Naive thymus-derived CD4-positive, alpha-beta T cell (primary cell): ENCODE measurements at regions of chr10 and their contacts with region 1.

Region 1: GRCh38 chr10:103367782-103368518 is at the start of gene TAF5:
- DNase-seq: peak; percentile 70 to 94 (median 90)
- ATAC-seq: peak; percentile 88
- H3K4me3 ChIP-seq: peak within 1 kb of the TSS; percentile 58
- H3K4me3 Mint-ChIP-seq: peak within 1 kb of the TSS; percentile 92 to 99 (median 96)
- H3K27ac ChIP-seq: peak within 1 kb of the TSS; percentile 77
- H3K27ac Mint-ChIP-seq: peak within 1 kb of the TSS; percentile 84 to 98 (median 94)
- H3K4me1 ChIP-seq: peaks cover 4 to 11% of the 10 kb centered on the region in 2 donors
- H3K4me1 Mint-ChIP-seq: peaks cover 0 to 35% (median 23%) of the 10 kb centered on the region in 7 donors
- H3K27me3 ChIP-seq: no peaks in the 10 kb centered on the region
- H3K27me3 Mint-ChIP-seq: no peaks in the 10 kb centered on the region
- total RNA-seq, gene TAF5: 4.7 to 8.9 (median 7.1) TPM

Region 2: DNA sequence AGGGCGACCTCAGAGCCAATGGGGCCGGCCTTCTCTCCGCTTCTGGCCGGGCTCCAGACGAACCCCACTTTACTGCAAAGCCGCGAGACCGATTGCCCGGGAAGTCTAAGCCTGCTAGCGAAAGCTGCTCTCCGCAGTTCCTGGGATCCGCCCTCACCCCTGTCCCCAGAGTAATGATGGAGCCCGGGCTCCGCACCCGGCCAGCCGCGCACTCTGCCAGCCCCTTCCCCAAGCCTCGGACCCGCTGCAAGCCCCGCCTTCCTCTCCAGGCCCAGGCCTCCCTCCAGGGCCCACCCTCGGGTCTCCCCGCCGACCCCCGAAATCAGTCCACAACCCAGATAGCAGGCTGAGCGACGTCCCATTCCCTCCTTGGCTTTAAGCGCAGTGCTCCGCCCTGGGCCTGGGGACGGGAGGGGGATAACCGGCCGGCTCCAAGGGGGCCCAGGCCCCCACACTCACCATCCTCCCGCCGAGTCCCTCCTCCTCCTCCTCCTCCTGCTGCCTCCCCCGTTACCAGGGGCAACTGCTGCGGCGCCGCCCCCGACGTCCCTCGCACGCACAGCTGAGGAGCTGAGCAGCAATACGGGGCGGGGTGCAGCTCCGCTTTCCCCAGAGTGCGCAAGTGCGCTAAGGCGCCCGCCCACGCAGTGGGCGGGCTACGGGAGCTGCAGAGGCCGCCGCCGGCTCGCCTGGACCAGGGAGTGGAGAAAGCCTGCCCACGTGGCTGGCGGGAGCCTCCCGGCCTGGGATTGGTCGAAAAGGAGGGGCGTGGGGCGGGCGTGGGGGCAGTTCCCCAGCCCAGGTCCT is 653.9 kb before region 1 on chr10 and contains the start of gene ARL3:
- CTCF ChIA-PET with region 1: no interaction called
- POLR2A ChIA-PET with region 1: no interaction called
- intact Hi-C with region 1: loop called in 1 of 2 experiments (anchors 1 kb)
- DNase-seq: peak; percentile 75 to 95 (median 89)
- ATAC-seq: peak; percentile 96
- H3K4me3 ChIP-seq: peak within 1 kb of the TSS; percentile 98
- H3K4me3 Mint-ChIP-seq: peak within 1 kb of the TSS; percentile 86 to 98 (median 94)
- H3K27ac ChIP-seq: peak within 1 kb of the TSS; percentile 92
- H3K27ac Mint-ChIP-seq: peak within 1 kb of the TSS; percentile 66 to 95 (median 90)
- H3K4me1 ChIP-seq: peaks cover 4 to 18% of the 10 kb centered on the region in 2 donors
- H3K4me1 Mint-ChIP-seq: peaks cover 26 to 52% (median 43%) of the 10 kb centered on the region in 7 donors
- H3K27me3 ChIP-seq: no peaks in the 10 kb centered on the region
- H3K27me3 Mint-ChIP-seq: no peaks in the 10 kb centered on the region
- total RNA-seq, gene ARL3: 1.3 to 5.1 (median 2.9) TPM

Region 3: DNA sequence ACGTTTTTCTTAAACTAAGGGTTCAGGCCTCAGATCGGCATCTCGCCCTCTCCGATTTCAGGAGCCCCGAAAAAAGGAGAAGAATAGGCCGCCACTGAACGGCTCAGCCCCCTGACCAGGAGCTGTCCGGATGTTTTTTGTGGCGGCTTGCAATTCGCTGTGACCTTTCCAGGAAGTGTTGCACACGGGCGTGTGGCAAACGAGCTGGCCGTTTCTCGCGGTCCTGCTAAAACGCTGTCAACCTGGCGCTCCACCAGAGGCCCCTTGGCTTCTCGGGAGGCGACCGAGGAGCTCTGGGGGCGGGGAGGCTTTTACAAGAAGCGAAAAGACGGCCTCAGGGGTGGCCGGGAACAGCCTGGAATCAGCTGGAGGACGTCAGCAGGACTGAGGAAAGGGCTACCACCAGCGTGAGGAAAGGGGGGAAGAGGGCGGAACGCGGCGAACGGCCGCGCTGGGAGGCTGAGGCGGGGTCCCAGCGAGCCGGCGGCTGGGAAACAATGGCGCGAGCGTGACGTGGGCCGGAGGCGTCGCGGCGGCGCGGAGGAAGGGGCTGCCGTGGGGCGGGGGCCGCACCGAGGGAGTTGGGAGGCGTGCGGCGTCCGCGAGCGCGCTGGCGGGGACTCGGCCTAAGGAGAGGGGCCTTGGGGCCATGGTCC is 175.4 kb before region 1 on chr10:
- CTCF ChIA-PET with region 1: no interaction called
- POLR2A ChIA-PET with region 1: interaction called, 3 read pairs
- intact Hi-C with region 1: loop called in 1 of 2 experiments (anchors 5 kb)
- DNase-seq: peak; percentile 36 to 76 (median 63)
- ATAC-seq: peak; percentile 60
- H3K4me3 ChIP-seq: peak overlapping the region; percentile 85
- H3K4me3 Mint-ChIP-seq: peak overlapping the region; percentile 91 to 100 (median 98)
- H3K27ac ChIP-seq: peak overlapping the region; percentile 97
- H3K27ac Mint-ChIP-seq: peak overlapping the region; percentile 81 to 100 (median 95)
- H3K4me1 ChIP-seq: peaks cover 6 to 21% of the 10 kb centered on the region in 2 donors
- H3K4me1 Mint-ChIP-seq: peaks cover 36 to 48% (median 44%) of the 10 kb centered on the region in 7 donors
- H3K27me3 ChIP-seq: no peaks in the 10 kb centered on the region
- H3K27me3 Mint-ChIP-seq: no peaks in the 10 kb centered on the region

Region 4: GRCh38 chr10:103254538-103255325 is 113.2 kb before region 1 on chr10:
- CTCF ChIA-PET with region 1: no interaction called
- POLR2A ChIA-PET with region 1: no interaction called
- intact Hi-C with region 1: no loop called
- DNase-seq: no peak
- ATAC-seq: no peak
- H3K4me3 ChIP-seq: no peak overlapping the region
- H3K4me3 Mint-ChIP-seq: no peak overlapping the region
- H3K27ac ChIP-seq: no peak overlapping the region
- H3K27ac Mint-ChIP-seq: peak overlapping the region in 1 of 9 donors; percentile 26
- H3K4me1 ChIP-seq: no peaks in the 10 kb centered on the region
- H3K4me1 Mint-ChIP-seq: peaks cover 0 to 11% (median 0%) of the 10 kb centered on the region in 7 donors
- H3K27me3 ChIP-seq: no peaks in the 10 kb centered on the region
- H3K27me3 Mint-ChIP-seq: peaks cover 0 to 10% (median 5%) of the 10 kb centered on the region in 5 donors

Region 5: GRCh38 chr10:103333925-103334520 is 33.9 kb before region 1 on chr10:
- CTCF ChIA-PET with region 1: no interaction called
- POLR2A ChIA-PET with region 1: no interaction called
- intact Hi-C with region 1: no loop called
- DNase-seq: peak in 5 of 9 donors; percentile 4 to 35 (median 18)
- ATAC-seq: no peak
- H3K4me3 ChIP-seq: no peak overlapping the region
- H3K4me3 Mint-ChIP-seq: no peak overlapping the region
- H3K27ac ChIP-seq: no peak overlapping the region
- H3K27ac Mint-ChIP-seq: no peak overlapping the region
- H3K4me1 ChIP-seq: no peaks in the 10 kb centered on the region
- H3K4me1 Mint-ChIP-seq: no peaks in the 10 kb centered on the region
- H3K27me3 ChIP-seq: no peaks in the 10 kb centered on the region
- H3K27me3 Mint-ChIP-seq: no peaks in the 10 kb centered on the region

Region 6: DNA sequence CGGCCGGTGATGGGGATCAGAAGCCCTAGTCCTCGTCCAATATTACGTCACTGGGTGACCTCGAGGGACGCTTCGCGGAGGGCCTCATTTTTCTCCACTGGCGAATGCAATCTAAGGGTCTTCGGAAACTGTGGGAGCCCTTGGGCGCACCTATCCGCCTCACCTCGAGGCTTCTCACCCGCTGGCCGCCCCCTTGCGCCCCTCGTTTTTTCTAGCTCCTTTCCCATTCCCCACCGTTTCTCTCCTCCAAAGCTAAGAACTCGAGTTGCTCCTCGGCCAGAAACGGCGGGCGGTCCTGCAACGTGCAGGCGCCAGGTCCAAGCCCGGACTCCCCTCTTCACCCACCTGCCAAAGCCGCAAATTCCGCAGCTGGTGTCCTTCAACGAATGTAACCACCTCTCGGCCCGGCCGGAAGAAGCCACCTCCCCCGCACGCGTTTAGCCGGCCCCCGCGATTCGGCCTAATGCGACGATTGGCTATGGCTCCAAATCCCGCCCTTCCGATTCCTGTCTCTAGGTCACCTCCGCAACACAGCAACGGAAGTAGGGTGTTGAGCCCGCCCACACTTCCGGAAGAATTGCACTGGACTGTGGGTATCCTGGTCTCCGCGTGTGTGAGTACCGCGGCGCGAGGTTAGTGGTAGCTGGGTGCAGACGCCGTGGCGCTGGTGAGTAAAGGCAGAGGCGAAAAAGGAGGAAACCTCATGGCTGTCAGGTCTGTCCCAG is 28.3 kb after region 1 on chr10 and contains the starts of genes ATP5MK and PDCD11:
- CTCF ChIA-PET with region 1: no interaction called
- POLR2A ChIA-PET with region 1: interaction called, 24 read pairs
- intact Hi-C with region 1: loop called (anchors 1 kb)
- DNase-seq: peak; percentile 75 to 93 (median 91)
- ATAC-seq: peak; percentile 100
- H3K4me3 ChIP-seq: peak within 1 kb of the TSS; percentile 91
- H3K4me3 Mint-ChIP-seq: peak within 1 kb of the TSS; percentile 91 to 99 (median 99)
- H3K27ac ChIP-seq: peak within 1 kb of the TSS; percentile 87
- H3K27ac Mint-ChIP-seq: peak within 1 kb of the TSS; percentile 89 to 97 (median 96)
- H3K4me1 ChIP-seq: peaks cover 25 to 33% of the 10 kb centered on the region in 2 donors
- H3K4me1 Mint-ChIP-seq: peaks cover 42 to 68% (median 62%) of the 10 kb centered on the region in 7 donors
- H3K27me3 ChIP-seq: no peaks in the 10 kb centered on the region
- H3K27me3 Mint-ChIP-seq: no peaks in the 10 kb centered on the region
- total RNA-seq, gene ATP5MK: 106 to 334 (median 120) TPM
- total RNA-seq, gene PDCD11: 28.8 to 56.3 (median 38.8) TPM

Region 7: DNA sequence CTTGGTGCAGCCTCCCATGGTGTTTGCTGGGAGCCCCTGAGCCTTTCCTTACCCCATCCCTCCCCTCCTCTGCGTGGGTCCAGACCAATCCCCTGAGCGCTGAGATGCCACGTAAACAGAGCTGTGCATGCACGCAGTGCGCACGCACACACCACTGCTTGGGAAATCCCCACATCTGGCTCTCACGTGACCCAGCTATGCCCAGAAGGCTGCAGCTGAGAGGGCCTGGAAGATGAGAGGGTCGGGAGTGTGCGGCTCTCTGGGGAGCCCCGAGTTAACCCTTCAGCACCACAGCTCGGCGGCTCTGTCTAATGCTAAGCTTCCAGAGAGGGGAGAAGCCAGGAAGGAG is 310.2 kb after region 1 on chr10:
- CTCF ChIA-PET with region 1: no interaction called
- POLR2A ChIA-PET with region 1: no interaction called
- intact Hi-C with region 1: loop called in 1 of 2 experiments (anchors 5 kb)
- DNase-seq: peak; percentile 67 to 97 (median 87)
- ATAC-seq: peak; percentile 98
- H3K4me3 ChIP-seq: peak overlapping the region; percentile 57
- H3K4me3 Mint-ChIP-seq: peak overlapping the region; percentile 76 to 92 (median 86)
- H3K27ac ChIP-seq: peak overlapping the region; percentile 87
- H3K27ac Mint-ChIP-seq: peak overlapping the region; percentile 83 to 99 (median 95)
- H3K4me1 ChIP-seq: peaks cover 18% of the 10 kb centered on the region in 2 donors
- H3K4me1 Mint-ChIP-seq: peaks cover 3 to 24% (median 17%) of the 10 kb centered on the region in 7 donors
- H3K27me3 ChIP-seq: no peaks in the 10 kb centered on the region
- H3K27me3 Mint-ChIP-seq: no peaks in the 10 kb centered on the region